Adrenal gland (tissue), 19 donors: ENCODE measurements at regions of chr11 and their contacts with region 1.

Region 1: DNA sequence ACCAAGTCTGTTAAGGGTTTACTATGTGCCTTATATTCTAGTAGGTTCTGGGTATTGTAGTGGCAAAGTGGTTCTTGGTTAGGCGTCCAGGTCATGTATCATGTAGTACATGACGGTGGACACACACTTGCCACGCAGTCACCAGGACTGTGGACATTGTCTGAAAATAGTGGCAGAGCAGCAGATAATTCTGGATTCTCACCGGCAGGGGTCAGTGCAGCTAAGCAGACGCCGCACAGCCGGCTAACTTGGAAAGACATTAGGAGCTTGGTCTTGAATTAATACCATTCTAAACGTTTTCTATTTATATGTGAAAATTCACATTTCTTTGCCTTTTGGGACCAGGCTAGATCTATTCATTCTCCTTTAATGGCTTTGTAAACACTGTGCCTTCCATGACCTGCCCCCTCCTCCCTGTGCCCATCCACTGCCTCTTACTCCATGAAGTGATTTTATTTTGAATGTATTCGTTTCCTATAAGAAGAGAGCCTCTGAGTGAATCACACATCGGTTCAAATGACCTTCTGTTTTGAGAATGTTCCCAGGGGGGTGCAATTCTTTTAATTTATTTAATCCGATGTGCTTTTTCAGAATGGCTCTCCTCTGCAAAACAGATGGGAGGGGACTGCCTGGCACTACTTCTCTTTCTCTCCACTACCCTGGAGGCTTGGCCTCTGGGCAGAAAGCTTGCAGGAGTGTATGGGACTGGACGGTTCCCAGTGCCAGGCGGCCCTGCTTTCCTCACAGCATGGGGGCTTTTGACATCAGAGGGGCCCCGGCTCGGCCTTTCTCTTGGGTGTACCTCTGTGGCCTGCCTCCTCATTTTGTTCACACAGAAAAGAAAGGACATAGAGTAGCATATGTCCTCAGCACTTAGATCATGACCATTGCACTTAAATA is 378.0 kb downstream of the NTM start:
- DNase-seq: peak; percentile 45 to 84 (median 69)
- H3K4me3 ChIP-seq: no peak overlapping the region
- H3K27ac ChIP-seq: no peak overlapping the region
- H3K4me1 ChIP-seq: no peaks in the 10 kb centered on the region
- H3K27me3 ChIP-seq: no peaks in the 10 kb centered on the region
- CTCF ChIP-seq: peak; percentile 54 to 84 (median 62)
- POLR2A ChIP-seq: no peak

Region 2: DNA sequence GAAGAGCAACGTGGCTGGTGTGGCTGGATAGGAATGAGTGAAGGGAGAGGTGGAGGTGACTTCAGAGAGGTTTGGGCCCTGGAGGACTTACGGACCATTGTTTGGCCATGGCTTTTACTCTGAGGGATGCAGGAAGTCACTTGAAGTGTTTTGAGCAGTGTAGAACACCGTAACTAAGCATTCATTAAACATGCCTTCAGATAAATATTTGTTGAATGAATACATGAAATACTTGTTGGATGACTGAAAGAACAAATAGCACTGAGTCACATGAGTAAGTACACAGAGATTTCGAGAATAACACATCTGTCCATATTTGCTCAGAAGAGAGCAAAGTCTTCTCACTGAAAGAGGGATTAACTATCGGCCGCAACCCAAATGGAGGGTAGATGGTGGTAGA is 649.4 kb before region 1 on chr11:
- intact Hi-C with region 1: no loop called
- DNase-seq: no peak
- H3K4me3 ChIP-seq: no peak overlapping the region
- H3K27ac ChIP-seq: no peak overlapping the region
- H3K4me1 ChIP-seq: no peaks in the 10 kb centered on the region
- H3K27me3 ChIP-seq: no peaks in the 10 kb centered on the region
- CTCF ChIP-seq: no peak
- POLR2A ChIP-seq: no peak

Region 3: DNA sequence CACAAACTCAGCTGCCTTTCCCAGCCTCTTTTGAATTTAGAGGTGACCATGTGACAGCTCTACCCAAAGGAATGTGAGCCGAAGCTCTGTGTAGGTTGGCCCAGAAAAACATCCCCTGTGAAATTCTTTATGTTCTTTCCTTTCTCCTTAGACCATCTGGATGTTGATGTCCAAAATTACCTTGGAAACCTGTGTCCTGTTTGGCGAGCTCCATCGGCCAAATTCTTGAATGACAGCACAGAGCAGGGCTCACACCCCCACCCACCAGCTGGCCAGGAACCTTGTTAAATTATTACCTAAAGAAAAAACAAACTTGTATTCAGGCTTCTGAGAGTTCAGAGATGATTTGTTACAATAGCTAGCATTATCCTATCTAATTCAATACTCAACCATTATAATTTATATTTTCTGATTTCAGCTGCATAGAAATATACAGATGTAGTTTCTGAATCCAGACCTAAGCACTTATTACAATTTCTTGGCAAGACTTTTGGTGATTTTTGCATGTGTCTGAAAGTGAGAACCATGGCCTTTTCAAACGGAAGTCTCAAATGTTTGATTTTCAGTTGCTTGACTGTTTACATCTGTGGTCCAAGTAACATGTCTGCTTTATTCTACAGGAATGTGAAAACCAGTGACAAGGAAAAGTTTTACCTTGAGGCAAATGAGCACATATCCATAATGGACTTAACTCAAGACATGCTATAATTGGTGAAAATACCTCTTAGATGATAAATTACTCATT is 176.2 kb after region 1 on chr11:
- intact Hi-C with region 1: no loop called
- DNase-seq: no peak
- H3K4me3 ChIP-seq: no peak overlapping the region
- H3K27ac ChIP-seq: no peak overlapping the region
- H3K4me1 ChIP-seq: no peaks in the 10 kb centered on the region
- H3K27me3 ChIP-seq: no peaks in the 10 kb centered on the region
- CTCF ChIP-seq: no peak
- POLR2A ChIP-seq: no peak

Region 4: DNA sequence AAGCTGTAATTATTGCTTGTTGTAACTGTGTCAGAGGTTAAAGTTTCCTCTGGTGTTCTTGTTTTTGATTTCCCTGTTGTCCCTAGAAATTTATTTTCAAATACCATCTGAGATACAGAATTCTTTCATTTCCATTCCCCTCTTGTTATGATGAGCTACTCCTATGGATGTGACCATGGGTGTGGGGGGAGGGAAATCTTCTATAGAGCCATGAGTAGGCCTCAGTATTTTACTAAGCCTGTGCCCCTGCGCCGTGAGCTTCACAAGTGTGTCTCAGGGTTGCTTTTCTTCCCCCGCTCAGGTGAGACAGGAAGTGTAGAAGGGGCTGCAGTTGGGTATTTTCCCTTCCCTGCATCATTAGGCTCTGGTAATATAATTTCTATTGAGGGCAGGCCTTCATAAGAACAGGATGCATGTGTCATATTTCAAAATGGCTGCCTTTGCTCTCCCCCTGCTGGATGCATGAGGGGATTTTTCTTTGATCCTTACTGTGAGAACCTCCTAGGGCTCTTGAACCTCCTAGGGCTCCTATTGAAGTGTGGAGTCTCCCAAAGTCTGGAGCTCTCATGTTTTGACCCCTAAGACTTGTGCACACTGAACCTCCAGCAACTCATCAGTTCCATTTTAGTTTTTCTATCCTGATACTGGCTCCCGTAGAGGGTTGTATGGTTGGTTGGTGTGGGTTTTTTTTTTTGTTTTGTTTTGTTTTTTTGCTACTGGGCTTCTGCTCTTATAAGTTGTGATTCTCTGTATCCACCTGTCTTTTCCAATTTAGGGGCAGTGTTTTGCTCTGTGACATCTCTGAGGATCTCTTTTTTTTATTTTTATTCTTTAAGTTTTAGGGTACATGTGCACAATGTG is 280.2 kb after region 1 on chr11:
- intact Hi-C with region 1: loop called in 1 of 2 experiments (anchors 5 kb)
- DNase-seq: peak in 3 of 7 donors; percentile 21 to 80 (median 66)
- H3K4me3 ChIP-seq: no peak overlapping the region
- H3K27ac ChIP-seq: no peak overlapping the region
- H3K4me1 ChIP-seq: no peaks in the 10 kb centered on the region
- H3K27me3 ChIP-seq: no peaks in the 10 kb centered on the region
- CTCF ChIP-seq: peak in 5 of 6 experiments; percentile 15 to 68 (median 46)
- POLR2A ChIP-seq: no peak

Region 5: GRCh38 chr11:132126973-132127899 is 378.8 kb after region 1 on chr11:
- intact Hi-C with region 1: loop called in 1 of 2 experiments (anchors 5 kb)
- DNase-seq: peak; percentile 56 to 78 (median 75)
- H3K4me3 ChIP-seq: peak overlapping the region in 1 of 4 donors; percentile 24
- H3K27ac ChIP-seq: peak overlapping the region in 1 of 5 donors; percentile 36
- H3K4me1 ChIP-seq: peaks cover 4 to 8% of the 10 kb centered on the region in 2 donors
- H3K27me3 ChIP-seq: no peaks in the 10 kb centered on the region
- CTCF ChIP-seq: peak in 5 of 6 experiments; percentile 52 to 61 (median 54)
- POLR2A ChIP-seq: no peak